ENCODE measurements at regions of chr18 and their contacts with region 1.

Region 1: GRCh38 chr18:48777026-48777743 is 173.6 kb downstream of the SMAD7 start:
- DNase-seq: peak; percentile 71
- H3K4me3 Mint-ChIP-seq: no peak overlapping the region
- H3K27ac Mint-ChIP-seq: no peak overlapping the region
- H3K4me1 Mint-ChIP-seq: peaks cover 3% of the 10 kb centered on the region
- H3K27me3 Mint-ChIP-seq: no peaks in the 10 kb centered on the region

Region 2: GRCh38 chr18:47683774-47684173 is 1093.4 kb before region 1 on chr18:
- CTCF ChIA-PET with region 1: no interaction called
- intact Hi-C with region 1: no loop called
- DNase-seq: no peak
- H3K4me3 Mint-ChIP-seq: no peak overlapping the region
- H3K27ac Mint-ChIP-seq: no peak overlapping the region
- H3K4me1 Mint-ChIP-seq: no peaks in the 10 kb centered on the region
- H3K27me3 Mint-ChIP-seq: peaks cover 9% of the 10 kb centered on the region

Region 3: GRCh38 chr18:48519431-48520100 is 257.6 kb before region 1 on chr18:
- CTCF ChIA-PET with region 1: no interaction called
- intact Hi-C with region 1: no loop called
- DNase-seq: no peak
- H3K4me3 Mint-ChIP-seq: no peak overlapping the region
- H3K27ac Mint-ChIP-seq: no peak overlapping the region
- H3K4me1 Mint-ChIP-seq: no peaks in the 10 kb centered on the region
- H3K27me3 Mint-ChIP-seq: peaks cover 17% of the 10 kb centered on the region

Region 4: DNA sequence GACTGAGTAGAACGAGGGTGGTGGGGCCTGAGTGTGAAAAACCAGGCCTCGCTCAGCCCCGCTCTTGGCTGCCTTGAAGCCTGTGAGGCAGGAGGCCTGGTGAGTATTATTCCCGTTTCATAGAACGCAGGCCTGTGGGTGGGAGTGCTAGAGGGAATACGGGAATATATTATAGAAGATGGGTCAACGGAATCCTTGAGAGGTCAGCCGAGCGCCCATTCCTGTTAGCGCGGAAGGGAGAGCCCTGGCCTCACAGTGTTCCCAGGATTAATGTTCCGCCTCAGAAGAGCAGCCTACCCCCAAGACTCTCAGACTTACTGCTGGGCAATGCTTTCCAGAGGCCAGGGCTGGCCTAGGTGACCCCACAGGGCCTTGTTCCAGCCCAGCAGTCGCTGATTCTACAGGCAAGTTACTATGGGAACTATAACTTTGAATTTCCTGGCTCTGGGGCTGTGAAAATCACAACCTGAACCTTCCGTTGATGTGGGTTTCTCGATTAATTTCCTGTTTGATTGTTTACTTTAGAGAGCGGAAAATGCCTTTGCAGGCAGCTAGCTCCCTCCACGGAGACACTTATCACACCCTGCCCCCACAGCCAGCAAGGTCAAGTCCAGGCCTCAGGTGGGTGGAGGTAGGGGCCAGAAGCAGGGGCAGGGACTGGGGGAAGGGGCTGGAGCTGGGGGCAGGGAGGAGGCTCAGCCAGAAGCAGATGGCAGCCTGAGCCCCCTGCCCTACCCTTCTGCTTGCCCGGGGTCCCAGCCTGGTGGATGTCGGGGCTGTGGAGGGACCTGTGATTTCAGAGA is 65.3 kb after region 1 on chr18:
- CTCF ChIA-PET with region 1: no interaction called
- intact Hi-C with region 1: loop called (anchors 2 kb)
- DNase-seq: peak; percentile 64
- H3K4me3 Mint-ChIP-seq: no peak overlapping the region
- H3K27ac Mint-ChIP-seq: peak overlapping the region; percentile 59
- H3K4me1 Mint-ChIP-seq: peaks cover 53% of the 10 kb centered on the region
- H3K27me3 Mint-ChIP-seq: no peaks in the 10 kb centered on the region

Region 5: GRCh38 chr18:48975649-48976204 is 198.5 kb after region 1 on chr18:
- CTCF ChIA-PET with region 1: interaction called, 4 read pairs
- intact Hi-C with region 1: loop called (anchors 1 kb)
- DNase-seq: peak; percentile 63
- H3K4me3 Mint-ChIP-seq: peak overlapping the region; percentile 24
- H3K27ac Mint-ChIP-seq: no peak overlapping the region
- H3K4me1 Mint-ChIP-seq: peaks cover 5% of the 10 kb centered on the region
- H3K27me3 Mint-ChIP-seq: peaks cover 21% of the 10 kb centered on the region

Region 6: DNA sequence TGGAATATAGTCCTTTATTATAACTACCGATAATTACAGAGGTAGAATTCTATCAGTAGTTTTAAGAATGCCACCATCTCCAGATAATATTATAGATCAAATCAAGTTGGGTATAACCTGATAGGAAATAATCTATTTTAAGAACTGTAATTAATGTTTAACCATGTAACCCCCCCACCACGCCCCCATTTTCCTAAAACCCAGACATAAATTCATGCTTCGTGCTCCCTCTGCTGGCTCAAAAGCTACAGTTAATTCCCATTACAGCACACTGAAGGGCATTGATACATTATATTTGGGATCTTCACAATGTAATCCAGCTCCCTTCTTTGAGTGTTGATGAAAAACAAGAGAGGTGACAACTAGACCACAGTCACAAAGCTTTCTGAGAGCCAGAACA is 401.6 kb after region 1 on chr18:
- CTCF ChIA-PET with region 1: no interaction called
- intact Hi-C with region 1: loop called (anchors 2 kb)
- DNase-seq: peak; percentile 20
- H3K4me3 Mint-ChIP-seq: no peak overlapping the region
- H3K27ac Mint-ChIP-seq: no peak overlapping the region
- H3K4me1 Mint-ChIP-seq: peaks cover 15% of the 10 kb centered on the region
- H3K27me3 Mint-ChIP-seq: no peaks in the 10 kb centered on the region

Region 7: DNA sequence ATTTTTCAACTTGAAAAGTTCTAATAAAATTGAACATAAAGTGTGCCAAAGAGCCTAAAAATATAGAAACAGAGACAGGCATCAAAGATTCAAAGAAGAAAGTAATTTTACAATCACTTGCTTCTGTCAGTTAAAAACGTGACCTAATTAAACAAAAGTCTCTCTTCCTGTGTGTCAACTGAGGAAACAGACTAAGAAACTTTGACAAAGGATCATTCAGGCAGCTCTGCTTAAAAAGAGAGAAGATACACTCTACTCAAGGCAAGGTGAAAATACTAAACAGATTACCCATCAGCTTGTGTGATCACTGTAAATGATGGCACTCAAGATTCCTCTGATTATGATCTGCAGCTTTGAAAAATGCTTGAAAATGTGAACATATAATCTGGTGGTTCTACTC is 635.5 kb after region 1 on chr18:
- CTCF ChIA-PET with region 1: no interaction called
- intact Hi-C with region 1: loop called (anchors 10 kb)
- DNase-seq: no peak
- H3K4me3 Mint-ChIP-seq: no peak overlapping the region
- H3K27ac Mint-ChIP-seq: peak overlapping the region; percentile 79
- H3K4me1 Mint-ChIP-seq: peaks cover 35% of the 10 kb centered on the region
- H3K27me3 Mint-ChIP-seq: no peaks in the 10 kb centered on the region

Measured in activated naive CD4-positive, alpha-beta T cell treated with anti-CD3 and anti-CD28 coated beads for 36 hours (primary cell).